Left ventricle myocardium superior (tissue), 1 donor: ENCODE measurements at regions of chr10 and their contacts with region 1.

Region 1: DNA sequence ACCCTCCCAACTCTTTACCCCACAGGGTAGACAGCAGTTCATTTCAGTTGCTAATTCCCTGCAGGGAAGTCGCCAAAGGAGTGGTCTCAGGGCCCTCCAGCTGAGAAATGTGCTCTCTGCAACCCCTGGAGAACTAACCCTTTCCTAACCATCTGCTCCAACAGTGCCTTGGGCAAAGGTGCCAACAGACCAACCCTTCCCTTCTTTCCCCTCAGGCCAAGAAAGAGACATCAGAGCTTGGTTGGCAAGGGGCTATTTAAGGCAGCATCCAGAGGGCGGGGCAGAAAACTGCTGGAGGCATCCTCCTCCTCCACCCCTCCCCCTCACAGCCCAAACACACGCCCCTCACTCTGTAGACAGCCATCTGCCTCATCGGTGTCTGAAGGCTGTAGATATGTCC is 1.7 kb downstream of the SORBS1 start:
- DNase-seq: peak; percentile 39
- ATAC-seq: peak; percentile 12

Region 2: DNA sequence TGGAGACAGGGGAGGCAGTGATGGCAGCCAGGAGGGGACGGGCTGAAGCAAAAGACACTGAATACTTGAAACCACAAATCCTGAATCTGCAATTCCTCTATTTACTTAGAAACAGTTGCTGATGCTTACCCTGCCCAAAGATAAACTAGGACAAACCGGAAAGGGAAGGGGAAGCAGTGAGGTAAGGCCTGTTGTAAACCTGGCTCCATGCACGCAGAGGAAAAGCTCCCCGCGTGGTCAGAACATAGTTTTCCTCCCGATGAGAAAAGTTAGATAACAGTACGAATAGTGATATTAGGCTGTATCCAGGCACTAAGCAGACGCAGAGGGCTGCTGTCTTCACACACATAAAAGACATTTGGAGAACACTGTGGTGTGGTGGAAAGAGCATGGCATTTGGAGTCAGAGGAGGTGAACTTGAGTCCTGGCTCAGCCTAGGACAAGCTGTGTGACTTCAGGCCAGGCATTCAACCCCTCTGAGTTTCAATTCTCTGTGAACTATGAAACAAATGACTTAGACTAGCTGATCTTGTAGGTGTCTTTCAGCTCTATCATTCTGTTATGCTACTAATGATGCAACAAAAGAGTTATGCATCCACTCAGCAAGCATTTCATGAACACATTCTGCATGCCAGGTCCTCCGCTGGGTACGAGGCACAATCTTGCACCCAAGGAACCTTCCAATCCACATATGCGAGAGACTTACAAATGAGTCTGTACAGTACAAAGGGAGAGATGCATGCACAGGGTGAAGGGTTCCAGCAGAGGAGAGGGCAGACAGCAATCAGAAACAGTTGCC is 79.2 kb before region 1 on chr10:
- intact Hi-C with region 1: loop called (anchors 10 kb)
- DNase-seq: peak; percentile 38
- ATAC-seq: peak; percentile 43

Region 3: DNA sequence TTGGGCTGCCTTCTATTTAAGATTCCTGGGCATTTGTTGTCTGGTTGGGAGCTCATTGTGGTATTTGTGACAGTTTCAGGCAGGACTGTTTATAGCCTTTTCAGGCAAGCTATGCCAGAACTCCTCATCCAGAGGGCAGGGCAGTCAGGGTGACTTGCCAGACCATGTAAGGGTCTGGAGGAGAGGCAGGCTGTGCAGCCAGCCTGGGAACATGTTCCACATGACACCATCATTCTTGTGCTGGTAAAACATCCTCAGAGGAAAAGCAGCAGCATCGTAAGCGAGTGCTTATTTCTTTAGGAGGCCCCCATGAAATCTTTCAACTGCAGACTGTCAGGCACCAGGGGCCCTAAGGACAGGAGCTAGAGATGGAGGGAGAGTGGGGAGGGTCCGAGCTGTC is 45.7 kb after region 1 on chr10:
- intact Hi-C with region 1: no loop called
- DNase-seq: no peak
- ATAC-seq: peak; percentile 53

Region 4: GRCh38 chr10:95693668-95694534 is 134.4 kb after region 1 on chr10 and contains the start of gene TCTN3:
- intact Hi-C with region 1: no loop called
- DNase-seq: peak; percentile 95
- ATAC-seq: peak; percentile 100
- total RNA-seq, gene TCTN3: 8.2 TPM